Thyroid gland (tissue), 4 donors: ENCODE measurements at regions of chr2 and their contacts with region 1.

Region 1: DNA sequence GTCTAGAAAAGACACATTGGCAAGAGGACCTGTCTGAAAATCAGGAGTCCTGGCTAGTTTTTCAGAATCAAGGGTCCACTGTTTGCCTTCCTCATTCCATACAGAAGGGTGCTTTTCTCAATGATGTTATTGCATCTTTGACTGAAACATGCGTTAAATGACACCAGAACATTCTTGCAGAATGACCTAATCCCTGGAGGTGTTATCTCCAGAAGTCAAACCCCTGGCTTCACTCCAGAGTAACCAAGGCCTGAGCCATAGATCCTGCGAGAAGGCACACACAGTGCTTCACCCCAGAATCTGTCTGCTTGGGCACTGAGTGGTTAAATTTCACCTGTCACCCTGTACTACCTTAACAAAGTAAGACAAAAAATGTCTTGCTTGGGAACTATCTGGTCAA is 1055.2 kb upstream of the FANCL start:
- DNase-seq: no peak
- H3K4me3 ChIP-seq: no peak overlapping the region
- H3K27ac ChIP-seq: no peak overlapping the region
- H3K4me1 ChIP-seq: no peaks in the 10 kb centered on the region
- H3K27me3 ChIP-seq: no peaks in the 10 kb centered on the region
- CTCF ChIP-seq: no peak
- POLR2A ChIP-seq: no peak

Region 2: DNA sequence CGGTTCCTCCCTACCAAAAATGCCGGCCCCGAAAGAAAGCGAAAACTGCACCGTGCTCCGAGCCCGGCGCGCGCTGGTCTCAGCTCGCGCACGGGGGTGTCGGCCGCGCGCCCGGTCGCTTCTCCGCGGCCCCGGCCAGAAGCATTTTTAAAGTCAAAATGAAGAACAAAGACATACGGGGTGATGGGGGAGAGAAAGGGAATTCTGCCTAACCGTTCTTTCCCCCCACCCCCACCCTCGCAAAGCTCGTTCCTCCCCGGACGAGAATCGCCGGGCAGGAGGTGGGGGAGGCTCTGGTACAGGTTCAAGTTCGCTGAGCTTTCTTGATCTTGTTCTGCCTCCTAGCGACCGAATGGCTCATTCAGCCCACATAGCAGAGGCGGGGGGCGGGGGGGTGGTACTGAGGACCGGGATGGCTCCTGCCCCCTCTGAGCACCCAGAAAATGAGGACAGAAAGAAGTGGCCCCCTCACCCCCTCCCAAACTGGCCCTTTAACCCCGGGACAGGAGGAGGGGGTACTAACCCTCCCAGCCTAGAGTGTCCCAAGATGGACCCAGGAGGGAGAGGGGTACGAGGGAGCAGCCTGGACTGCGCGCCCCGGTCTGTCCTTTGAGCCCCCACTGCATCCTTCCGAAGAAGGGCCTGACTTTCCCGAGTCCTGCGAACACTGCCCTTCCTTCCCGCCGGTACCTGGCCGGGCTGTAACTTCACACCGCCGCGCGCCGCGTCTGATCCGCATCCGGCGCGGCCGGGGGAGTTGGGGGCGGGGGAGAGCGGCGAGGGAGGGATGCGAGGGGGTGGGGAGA is 1254.1 kb after region 1 on chr2:
- intact Hi-C with region 1: loop called (anchors 10 kb)
- DNase-seq: peak; percentile 83 to 86
- H3K4me3 ChIP-seq: peak overlapping the region; percentile 22 to 60 (median 27)
- H3K27ac ChIP-seq: no peak overlapping the region
- H3K4me1 ChIP-seq: peaks cover 23 to 24% of the 10 kb centered on the region in 2 donors
- H3K27me3 ChIP-seq: no peaks in the 10 kb centered on the region
- CTCF ChIP-seq: peak in 5 of 6 experiments; percentile 40 to 81 (median 72)
- POLR2A ChIP-seq: no peak